Endothelial cell of umbilical vein (primary cell): ENCODE measurements at regions of chr4 and their contacts with region 1.

Region 1: GRCh38 chr4:99574530-99575324 is at the start of gene MTTP:
- DNase-seq: no peak
- H3K4me3 ChIP-seq: no peak within 1 kb of the TSS
- H3K27ac ChIP-seq: no peak within 1 kb of the TSS
- H3K4me1 ChIP-seq: no peaks in the 10 kb centered on the region
- H3K27me3 ChIP-seq: peaks cover 3 to 22% of the 10 kb centered on the region in 2 experiments
- CTCF ChIP-seq: no peak
- POLR2A ChIP-seq: no peak
- total RNA-seq, gene MTTP: not detected in 2 replicates

Region 2: GRCh38 chr4:100848869-100849268 is 1274.1 kb after region 1 on chr4:
- CTCF ChIA-PET with region 1: no interaction called
- POLR2A ChIA-PET with region 1: no interaction called
- dilution Hi-C with region 1: no loop called
- intact Hi-C with region 1: loop called (anchors 10 kb)
- DNase-seq: no peak
- H3K4me3 ChIP-seq: no peak overlapping the region
- H3K27ac ChIP-seq: no peak overlapping the region
- H3K4me1 ChIP-seq: no peaks in the 10 kb centered on the region
- H3K27me3 ChIP-seq: no peaks in the 10 kb centered on the region
- CTCF ChIP-seq: peak in 1 of 2 donors; percentile 19
- POLR2A ChIP-seq: no peak